ENCODE measurements at regions of chr10 and their contacts with region 1.

Region 1: DNA sequence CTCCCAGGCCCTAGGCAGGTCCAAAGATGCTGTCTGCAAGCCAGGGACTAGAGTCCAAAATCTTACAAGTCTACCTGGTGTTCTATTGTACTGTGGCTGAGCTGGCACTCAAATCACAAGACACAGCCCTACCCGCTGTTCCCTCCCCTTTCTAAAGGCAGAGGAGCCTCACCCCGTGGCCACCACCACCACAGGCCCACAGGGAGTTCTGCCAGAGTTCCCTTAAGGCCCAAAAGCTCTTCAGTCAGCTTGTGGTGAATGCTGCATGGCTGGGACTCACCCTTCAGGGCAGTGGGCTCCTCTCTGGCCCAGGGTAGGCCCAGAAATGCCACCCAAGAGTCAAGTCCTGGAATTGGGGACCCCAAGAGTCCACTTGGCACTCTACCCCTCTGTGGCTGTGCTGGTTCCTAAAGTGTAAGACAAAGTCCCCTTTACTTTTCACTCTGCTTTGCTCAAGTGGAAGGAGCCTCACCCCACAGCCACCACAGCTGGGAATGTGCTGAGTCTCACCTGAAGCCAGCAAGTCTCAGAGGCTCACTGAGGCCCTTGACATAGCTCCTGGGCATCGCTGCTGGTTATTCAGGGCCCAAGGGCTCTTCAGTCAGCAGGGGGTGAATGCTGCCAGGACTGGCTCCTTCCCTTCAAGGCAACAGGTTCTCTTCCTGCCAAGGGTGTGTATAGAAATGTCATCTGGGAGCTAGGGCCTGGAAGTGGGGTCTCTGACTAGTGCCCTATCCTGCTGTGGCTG is 48.8 kb upstream of the PSAP start:
- DNase-seq: no peak
- ATAC-seq: peak in 1 of 8 donors; percentile 7
- H3K4me3 ChIP-seq: no peak overlapping the region
- H3K27ac ChIP-seq: no peak overlapping the region
- H3K4me1 ChIP-seq: peaks cover 0 to 14% (median 10%) of the 10 kb centered on the region in 9 donors
- H3K27me3 ChIP-seq: no peaks in the 10 kb centered on the region
- CTCF ChIP-seq: no peak

Region 2: GRCh38 chr10:71835671-71836595 is 63.9 kb before region 1 on chr10:
- intact Hi-C with region 1: loop called in 8 of 10 experiments (anchors 5 to 10 kb)
- DNase-seq: peak; percentile 69 to 72
- ATAC-seq: peak; percentile 34 to 70 (median 56)
- H3K4me3 ChIP-seq: peak overlapping the region in 1 of 10 donors; percentile 10
- H3K27ac ChIP-seq: peak overlapping the region; percentile 23 to 90 (median 83)
- H3K4me1 ChIP-seq: peaks cover 36 to 100% (median 85%) of the 10 kb centered on the region in 9 donors
- H3K27me3 ChIP-seq: no peaks in the 10 kb centered on the region
- CTCF ChIP-seq: no peak

Region 3: GRCh38 chr10:72048450-72049124 is 148.7 kb after region 1 on chr10:
- intact Hi-C with region 1: loop called in 9 of 10 experiments (anchors 1 to 5 kb)
- DNase-seq: peak; percentile 94
- ATAC-seq: peak; percentile 58 to 91 (median 84)
- H3K4me3 ChIP-seq: no peak overlapping the region
- H3K27ac ChIP-seq: no peak overlapping the region
- H3K4me1 ChIP-seq: peaks cover 0 to 25% (median 10%) of the 10 kb centered on the region in 9 donors
- H3K27me3 ChIP-seq: no peaks in the 10 kb centered on the region
- CTCF ChIP-seq: peak; percentile 99 to 100 (median 100)